CD4-positive, alpha-beta memory T cell (primary cell): ENCODE measurements at regions of chr13 and their contacts with region 1.

Region 1: DNA sequence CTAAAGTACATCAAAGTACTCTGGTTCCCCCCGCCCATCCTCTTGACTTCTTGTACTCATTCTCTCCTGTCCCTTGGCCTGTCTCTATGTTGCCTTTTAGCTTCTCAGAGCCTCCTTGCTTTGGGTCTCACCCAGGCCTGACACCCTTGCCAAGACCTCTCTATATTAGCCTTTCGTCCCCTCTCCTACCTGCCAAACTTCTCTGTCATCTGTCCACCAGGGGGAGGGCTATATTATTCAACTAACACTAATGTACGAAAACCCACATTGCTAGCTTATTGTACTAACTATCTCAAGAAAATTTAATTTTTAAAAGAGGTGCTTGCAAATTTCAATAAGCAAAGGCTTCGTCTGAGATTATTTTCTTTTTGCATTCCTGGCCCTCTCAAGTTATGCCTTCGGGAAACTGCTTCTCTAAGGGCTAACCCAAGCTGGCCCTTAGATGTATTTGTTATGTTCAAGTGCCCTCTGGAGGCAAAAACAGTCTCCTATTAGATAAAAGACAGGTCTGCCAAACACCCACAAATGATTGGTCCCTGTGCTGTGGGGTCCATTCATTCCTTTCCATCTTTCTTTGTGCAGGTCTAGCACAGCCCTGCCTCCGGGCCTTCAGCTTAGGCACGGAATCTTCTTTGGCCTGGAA is 6.3 kb upstream of the MRPS31 start:
- DNase-seq: peak in 3 of 5 donors; percentile 59 to 75 (median 65)
- H3K4me3 ChIP-seq: peak overlapping the region; percentile 40 to 52
- H3K4me3 Mint-ChIP-seq: peak overlapping the region; percentile 77 to 92 (median 89)
- H3K27ac ChIP-seq: peak overlapping the region; percentile 72
- H3K27ac Mint-ChIP-seq: peak overlapping the region; percentile 93 to 100 (median 99)
- H3K4me1 ChIP-seq: peaks cover 30% of the 10 kb centered on the region
- H3K4me1 Mint-ChIP-seq: peaks cover 19 to 34% (median 22%) of the 10 kb centered on the region in 4 donors
- H3K27me3 ChIP-seq: no peaks in the 10 kb centered on the region
- H3K27me3 Mint-ChIP-seq: no peaks in the 10 kb centered on the region

Region 2: DNA sequence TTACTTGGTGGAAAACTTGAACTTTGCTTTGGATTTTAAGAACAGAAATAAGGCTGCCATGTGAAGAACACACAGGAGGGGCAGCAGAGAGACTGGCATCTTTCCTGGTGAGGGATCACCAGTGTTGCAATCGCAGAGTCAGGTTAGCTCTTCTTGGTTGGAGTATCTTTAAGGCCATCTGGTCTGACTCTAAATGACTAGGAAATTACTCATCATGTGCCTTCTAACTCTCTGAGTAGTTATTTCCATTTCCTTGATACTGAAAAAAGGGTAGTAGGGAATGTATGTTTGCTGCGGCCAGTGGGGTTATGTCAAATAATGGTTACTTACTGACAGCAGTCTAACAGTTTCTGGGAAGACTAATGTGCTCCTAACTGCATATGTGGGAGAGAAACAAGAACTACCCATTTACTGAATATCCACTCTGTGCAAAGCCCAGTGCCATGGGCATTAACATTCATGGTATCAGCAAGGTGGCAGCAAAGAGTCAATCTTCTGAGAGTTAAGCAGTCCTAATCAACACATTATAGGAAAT is 999.7 kb before region 1 on chr13:
- CTCF ChIA-PET with region 1: interaction called, 22 read pairs
- POLR2A ChIA-PET with region 1: no interaction called
- intact Hi-C with region 1: loop called (anchors 1 kb)
- DNase-seq: peak; percentile 28 to 51 (median 37)
- H3K4me3 ChIP-seq: no peak overlapping the region
- H3K4me3 Mint-ChIP-seq: no peak overlapping the region
- H3K27ac ChIP-seq: no peak overlapping the region
- H3K27ac Mint-ChIP-seq: peak overlapping the region in 5 of 7 donors; percentile 22 to 78 (median 62)
- H3K4me1 ChIP-seq: peaks cover 29% of the 10 kb centered on the region
- H3K4me1 Mint-ChIP-seq: peaks cover 25 to 33% (median 29%) of the 10 kb centered on the region in 4 donors
- H3K27me3 ChIP-seq: no peaks in the 10 kb centered on the region
- H3K27me3 Mint-ChIP-seq: no peaks in the 10 kb centered on the region

Region 3: GRCh38 chr13:40190641-40191100 is 586.6 kb before region 1 on chr13:
- CTCF ChIA-PET with region 1: interaction called, 6 read pairs
- POLR2A ChIA-PET with region 1: interaction called, 6 read pairs
- intact Hi-C with region 1: loop called (anchors 5 kb)
- DNase-seq: peak; percentile 70 to 88 (median 75)
- H3K4me3 ChIP-seq: peak overlapping the region in 1 of 2 donors; percentile 37
- H3K4me3 Mint-ChIP-seq: peak overlapping the region; percentile 11 to 90 (median 83)
- H3K27ac ChIP-seq: peak overlapping the region; percentile 56
- H3K27ac Mint-ChIP-seq: peak overlapping the region; percentile 95 to 98 (median 96)
- H3K4me1 ChIP-seq: peaks cover 68% of the 10 kb centered on the region
- H3K4me1 Mint-ChIP-seq: peaks cover 61 to 79% (median 69%) of the 10 kb centered on the region in 4 donors
- H3K27me3 ChIP-seq: no peaks in the 10 kb centered on the region
- H3K27me3 Mint-ChIP-seq: no peaks in the 10 kb centered on the region

Region 4: GRCh38 chr13:40682449-40683240 is 94.6 kb before region 1 on chr13:
- CTCF ChIA-PET with region 1: interaction called, 36 read pairs
- POLR2A ChIA-PET with region 1: interaction called, 3 read pairs
- intact Hi-C with region 1: loop called (anchors 5 kb)
- DNase-seq: peak in 4 of 5 donors; percentile 44 to 58 (median 52)
- H3K4me3 ChIP-seq: no peak overlapping the region
- H3K4me3 Mint-ChIP-seq: peak overlapping the region in 1 of 8 donors; percentile 46
- H3K27ac ChIP-seq: no peak overlapping the region
- H3K27ac Mint-ChIP-seq: peak overlapping the region in 1 of 7 donors; percentile 48
- H3K4me1 ChIP-seq: peaks cover 4% of the 10 kb centered on the region
- H3K4me1 Mint-ChIP-seq: peaks cover 5 to 8% (median 6%) of the 10 kb centered on the region in 4 donors
- H3K27me3 ChIP-seq: no peaks in the 10 kb centered on the region
- H3K27me3 Mint-ChIP-seq: no peaks in the 10 kb centered on the region

Region 5: DNA sequence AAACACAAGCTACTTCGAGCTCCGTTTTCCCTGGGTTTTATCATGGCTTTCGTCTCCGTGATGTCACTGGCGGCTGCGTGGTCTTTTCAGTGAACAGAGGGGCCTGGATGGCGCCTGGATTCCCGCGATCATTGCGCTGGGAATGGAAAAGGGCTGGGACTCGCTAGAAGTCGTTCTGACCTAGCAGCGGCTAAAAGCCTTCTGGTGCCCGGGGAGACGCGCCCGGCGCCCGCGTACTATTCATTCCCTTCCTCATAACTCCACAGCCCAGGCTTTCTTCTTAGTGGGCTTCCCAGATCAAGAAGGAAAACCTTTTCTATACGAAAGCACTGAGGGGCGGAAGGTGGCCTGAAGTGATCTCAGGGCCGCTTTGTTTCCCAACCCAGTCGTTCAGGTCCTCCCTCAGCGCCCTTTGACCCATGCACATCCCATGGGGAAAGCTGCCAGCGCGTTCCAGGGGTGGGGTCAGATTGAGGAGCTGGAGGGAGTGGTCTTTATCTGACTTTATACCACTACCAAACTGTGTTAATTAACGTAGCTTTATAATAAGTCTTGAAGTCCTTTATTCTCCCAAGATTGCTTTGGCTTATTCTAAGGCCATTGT is 145.3 kb after region 1 on chr13:
- CTCF ChIA-PET with region 1: interaction called, 9 read pairs
- POLR2A ChIA-PET with region 1: interaction called, 12 read pairs
- intact Hi-C with region 1: loop called (anchors 1 kb)
- DNase-seq: no peak
- H3K4me3 ChIP-seq: no peak overlapping the region
- H3K4me3 Mint-ChIP-seq: peak overlapping the region; percentile 63 to 83 (median 73)
- H3K27ac ChIP-seq: no peak overlapping the region
- H3K27ac Mint-ChIP-seq: peak overlapping the region in 6 of 7 donors; percentile 70 to 90 (median 80)
- H3K4me1 ChIP-seq: peaks cover 15% of the 10 kb centered on the region
- H3K4me1 Mint-ChIP-seq: peaks cover 12 to 29% (median 21%) of the 10 kb centered on the region in 4 donors
- H3K27me3 ChIP-seq: no peaks in the 10 kb centered on the region
- H3K27me3 Mint-ChIP-seq: no peaks in the 10 kb centered on the region

Region 6: DNA sequence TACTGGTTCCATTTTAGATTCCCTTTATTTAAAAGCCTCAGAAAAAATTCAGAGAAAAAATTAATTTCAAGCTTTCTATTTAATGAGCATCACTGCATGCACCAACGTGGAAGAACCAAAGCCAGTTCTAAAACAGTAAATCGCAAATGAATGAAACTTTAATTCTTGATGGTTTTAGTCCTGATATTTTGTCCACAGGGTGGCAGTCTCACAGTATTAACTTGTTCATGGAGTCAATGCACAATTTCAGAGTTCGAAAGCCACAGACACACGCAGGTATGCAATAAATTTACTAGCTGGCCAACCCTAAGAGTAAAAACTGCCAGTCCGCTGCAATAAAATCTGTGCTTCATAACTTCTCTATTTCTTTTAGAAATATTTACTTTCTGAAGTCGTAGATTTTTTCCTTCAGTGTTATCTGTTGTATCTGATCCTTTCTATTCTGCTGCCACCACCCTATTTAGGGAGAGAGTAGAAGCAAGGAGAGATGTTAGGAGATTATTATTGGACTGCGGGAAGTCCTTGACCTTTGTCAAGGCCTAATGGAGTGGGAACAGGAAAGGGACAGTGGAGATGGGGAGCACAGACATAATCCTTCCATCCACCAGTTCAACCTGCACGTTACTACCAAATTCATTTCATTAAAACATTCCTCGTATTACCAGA is 277.1 kb after region 1 on chr13:
- CTCF ChIA-PET with region 1: interaction called, 3 read pairs
- POLR2A ChIA-PET with region 1: no interaction called
- intact Hi-C with region 1: loop called (anchors 2 kb)
- DNase-seq: peak; percentile 50 to 60 (median 56)
- H3K4me3 ChIP-seq: no peak overlapping the region
- H3K4me3 Mint-ChIP-seq: peak overlapping the region in 3 of 8 donors; percentile 27 to 73 (median 31)
- H3K27ac ChIP-seq: no peak overlapping the region
- H3K27ac Mint-ChIP-seq: peak overlapping the region in 4 of 7 donors; percentile 8 to 40 (median 22)
- H3K4me1 ChIP-seq: peaks cover 32% of the 10 kb centered on the region
- H3K4me1 Mint-ChIP-seq: peaks cover 30 to 50% (median 35%) of the 10 kb centered on the region in 4 donors
- H3K27me3 ChIP-seq: no peaks in the 10 kb centered on the region
- H3K27me3 Mint-ChIP-seq: no peaks in the 10 kb centered on the region

Region 7: GRCh38 chr13:41145146-41145908 is 368.0 kb after region 1 on chr13:
- CTCF ChIA-PET with region 1: no interaction called
- POLR2A ChIA-PET with region 1: no interaction called
- intact Hi-C with region 1: no loop called
- DNase-seq: no peak
- H3K4me3 ChIP-seq: no peak overlapping the region
- H3K4me3 Mint-ChIP-seq: no peak overlapping the region
- H3K27ac ChIP-seq: no peak overlapping the region
- H3K27ac Mint-ChIP-seq: no peak overlapping the region
- H3K4me1 ChIP-seq: no peaks in the 10 kb centered on the region
- H3K4me1 Mint-ChIP-seq: no peaks in the 10 kb centered on the region
- H3K27me3 ChIP-seq: no peaks in the 10 kb centered on the region
- H3K27me3 Mint-ChIP-seq: no peaks in the 10 kb centered on the region